ENCODE measurements at regions of chr11 and their contacts with region 1.

Region 1: DNA sequence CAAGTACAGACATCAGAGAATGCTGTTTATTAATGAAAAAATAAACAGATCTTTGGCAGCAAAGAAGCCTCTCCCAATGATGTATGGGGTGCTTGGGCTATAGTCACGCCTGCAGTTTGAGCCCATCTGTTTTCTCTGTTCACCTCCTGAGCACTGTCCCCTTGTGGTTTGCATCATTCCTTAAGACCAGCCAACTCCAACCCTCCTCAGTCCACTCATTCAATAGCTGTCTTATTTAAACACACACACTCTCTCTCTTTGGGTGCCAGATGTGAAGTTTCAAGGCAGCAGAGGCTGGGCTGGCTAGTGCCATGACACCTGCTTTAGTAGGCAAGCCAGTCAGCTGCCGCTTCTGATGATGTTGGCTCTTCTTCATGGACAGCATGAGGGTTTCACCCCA is 58.1 kb downstream of the POLD3 start:
- DNase-seq: peak; percentile 100
- H3K4me3 ChIP-seq: no peak overlapping the region
- H3K27ac ChIP-seq: peak overlapping the region; percentile 52
- H3K27me3 ChIP-seq: no peaks in the 10 kb centered on the region
- CTCF ChIP-seq: no peak

Region 2: DNA sequence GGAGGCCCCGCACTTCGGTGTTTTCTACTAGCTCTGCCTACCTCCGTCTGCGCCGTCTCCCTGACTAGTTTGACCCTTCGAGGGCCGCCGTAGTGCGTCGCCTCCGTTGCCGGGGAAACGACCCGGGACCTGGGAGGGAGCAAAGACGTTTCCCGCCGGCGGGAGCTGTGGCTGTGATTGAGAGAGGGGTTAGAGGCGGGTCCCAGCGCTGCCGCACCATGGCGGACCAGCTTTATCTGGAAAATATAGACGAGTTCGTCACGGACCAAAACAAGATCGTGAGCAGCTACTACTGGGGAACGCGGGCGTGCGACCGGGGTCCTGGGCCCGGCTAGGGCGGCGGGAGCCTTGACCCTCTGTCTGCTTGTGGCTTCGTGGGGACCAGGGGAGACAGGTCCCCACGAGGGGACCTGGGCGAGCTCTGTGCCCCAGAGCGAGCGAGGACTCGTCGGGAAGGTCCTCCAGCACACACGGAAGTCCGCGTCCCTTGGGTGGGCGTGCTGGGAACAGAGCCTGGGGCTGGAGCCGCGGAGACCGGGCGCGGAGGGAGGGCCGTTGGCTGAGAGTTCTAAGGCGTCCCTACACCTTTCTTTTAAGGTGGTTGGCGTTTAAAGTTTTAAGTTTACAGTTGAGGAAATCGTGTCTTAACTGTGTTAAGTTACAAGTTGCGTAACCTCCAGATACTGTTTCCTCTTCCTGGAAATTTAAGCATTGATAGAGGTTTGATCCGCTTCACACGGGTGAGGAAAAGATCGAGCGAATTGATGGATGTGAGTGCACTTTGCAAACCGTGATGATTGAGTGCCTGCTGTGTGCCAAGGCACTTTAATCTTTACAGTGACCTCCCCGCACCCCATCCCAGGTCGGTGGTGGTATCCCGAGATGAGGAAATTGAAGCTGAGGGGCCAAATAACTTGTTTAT is 57.8 kb before region 1 on chr11 and contains the start of gene POLD3:
- CTCF ChIA-PET with region 1: no interaction called
- POLR2A ChIA-PET with region 1: no interaction called
- DNase-seq: peak; percentile 51
- H3K4me3 ChIP-seq: peak within 1 kb of the TSS; percentile 89
- H3K27ac ChIP-seq: peak within 1 kb of the TSS; percentile 73
- H3K27me3 ChIP-seq: peaks cover 2% of the 10 kb centered on the region
- CTCF ChIP-seq: no peak
- polyA plus RNA-seq, gene POLD3: 10.0 and 14.8 TPM in 2 replicates

Region 3: GRCh38 chr11:74672956-74673692 is 22.6 kb after region 1 on chr11:
- CTCF ChIA-PET with region 1: interaction called, 3 read pairs
- POLR2A ChIA-PET with region 1: interaction called, 19 read pairs
- DNase-seq: peak; percentile 95
- H3K4me3 ChIP-seq: peak overlapping the region; percentile 33
- H3K27ac ChIP-seq: peak overlapping the region; percentile 99
- H3K27me3 ChIP-seq: no peaks in the 10 kb centered on the region
- CTCF ChIP-seq: no peak

Measured in AG04450 (cell line).